CD8-positive, alpha-beta memory T cell (primary cell): ENCODE measurements at regions of chr10 and their contacts with region 1.

Region 1: DNA sequence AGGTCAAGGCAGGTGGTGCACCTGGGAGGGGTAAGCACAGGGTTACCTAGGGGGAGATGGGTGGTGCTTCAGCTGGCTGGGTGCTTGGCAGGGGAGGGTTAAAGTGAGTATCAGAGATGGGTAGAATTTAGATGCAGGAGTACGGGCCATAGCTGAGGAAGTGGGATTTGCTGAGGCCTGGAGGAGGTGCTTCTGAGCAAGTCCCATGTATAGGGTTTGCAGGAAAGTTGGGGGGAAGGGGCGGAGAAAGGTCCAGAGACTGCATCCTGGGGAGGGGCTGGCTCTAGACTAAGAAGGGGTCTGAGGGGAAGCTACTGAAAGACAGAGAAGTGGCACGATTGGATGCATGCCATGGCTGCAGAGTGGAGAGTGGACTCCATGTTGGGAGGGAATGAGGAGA is 281.6 kb upstream of the ZNF32 start:
- DNase-seq: no peak
- H3K4me3 ChIP-seq: no peak overlapping the region
- H3K4me3 Mint-ChIP-seq: no peak overlapping the region
- H3K27ac ChIP-seq: no peak overlapping the region
- H3K27ac Mint-ChIP-seq: no peak overlapping the region
- H3K4me1 ChIP-seq: no peaks in the 10 kb centered on the region
- H3K4me1 Mint-ChIP-seq: no peaks in the 10 kb centered on the region
- H3K27me3 ChIP-seq: no peaks in the 10 kb centered on the region
- H3K27me3 Mint-ChIP-seq: peaks cover 22 to 38% of the 10 kb centered on the region in 2 donors

Region 2: DNA sequence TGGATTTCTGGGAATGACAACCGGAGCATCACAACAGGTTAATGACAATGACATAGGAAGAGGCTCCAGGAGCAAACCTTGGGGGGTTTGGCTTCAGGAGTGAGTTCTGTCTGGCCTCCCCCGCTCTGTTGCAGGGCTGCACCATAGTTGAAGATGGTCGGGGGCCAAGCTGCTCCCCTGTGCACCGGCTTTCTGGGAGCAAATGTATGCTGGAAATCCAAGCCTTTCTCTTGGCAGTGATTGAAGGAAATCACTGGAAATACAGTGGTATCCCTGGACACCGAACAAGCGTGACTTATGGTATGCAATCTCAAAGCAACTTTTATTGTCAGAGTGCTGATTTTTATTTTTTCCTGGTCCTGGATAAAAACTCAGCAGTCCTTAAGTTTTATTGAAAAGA is 29.7 kb before region 1 on chr10:
- CTCF ChIA-PET with region 1: no interaction called
- POLR2A ChIA-PET with region 1: interaction called, 12 read pairs
- DNase-seq: no peak
- H3K4me3 ChIP-seq: no peak overlapping the region
- H3K4me3 Mint-ChIP-seq: no peak overlapping the region
- H3K27ac ChIP-seq: no peak overlapping the region
- H3K27ac Mint-ChIP-seq: no peak overlapping the region
- H3K4me1 ChIP-seq: no peaks in the 10 kb centered on the region
- H3K4me1 Mint-ChIP-seq: no peaks in the 10 kb centered on the region
- H3K27me3 ChIP-seq: no peaks in the 10 kb centered on the region
- H3K27me3 Mint-ChIP-seq: peaks cover 16 to 18% of the 10 kb centered on the region in 2 donors

Region 3: GRCh38 chr10:43913676-43914385 is 16.4 kb before region 1 on chr10:
- CTCF ChIA-PET with region 1: no interaction called
- POLR2A ChIA-PET with region 1: no interaction called
- DNase-seq: no peak
- H3K4me3 ChIP-seq: no peak overlapping the region
- H3K4me3 Mint-ChIP-seq: no peak overlapping the region
- H3K27ac ChIP-seq: no peak overlapping the region
- H3K27ac Mint-ChIP-seq: no peak overlapping the region
- H3K4me1 ChIP-seq: peaks cover 6% of the 10 kb centered on the region
- H3K4me1 Mint-ChIP-seq: peaks cover 3 to 17% (median 12%) of the 10 kb centered on the region in 3 donors
- H3K27me3 ChIP-seq: no peaks in the 10 kb centered on the region
- H3K27me3 Mint-ChIP-seq: peaks cover 0 to 2% of the 10 kb centered on the region in 2 donors